ENCODE measurements at regions of chr15 and their contacts with region 1.

Region 1: DNA sequence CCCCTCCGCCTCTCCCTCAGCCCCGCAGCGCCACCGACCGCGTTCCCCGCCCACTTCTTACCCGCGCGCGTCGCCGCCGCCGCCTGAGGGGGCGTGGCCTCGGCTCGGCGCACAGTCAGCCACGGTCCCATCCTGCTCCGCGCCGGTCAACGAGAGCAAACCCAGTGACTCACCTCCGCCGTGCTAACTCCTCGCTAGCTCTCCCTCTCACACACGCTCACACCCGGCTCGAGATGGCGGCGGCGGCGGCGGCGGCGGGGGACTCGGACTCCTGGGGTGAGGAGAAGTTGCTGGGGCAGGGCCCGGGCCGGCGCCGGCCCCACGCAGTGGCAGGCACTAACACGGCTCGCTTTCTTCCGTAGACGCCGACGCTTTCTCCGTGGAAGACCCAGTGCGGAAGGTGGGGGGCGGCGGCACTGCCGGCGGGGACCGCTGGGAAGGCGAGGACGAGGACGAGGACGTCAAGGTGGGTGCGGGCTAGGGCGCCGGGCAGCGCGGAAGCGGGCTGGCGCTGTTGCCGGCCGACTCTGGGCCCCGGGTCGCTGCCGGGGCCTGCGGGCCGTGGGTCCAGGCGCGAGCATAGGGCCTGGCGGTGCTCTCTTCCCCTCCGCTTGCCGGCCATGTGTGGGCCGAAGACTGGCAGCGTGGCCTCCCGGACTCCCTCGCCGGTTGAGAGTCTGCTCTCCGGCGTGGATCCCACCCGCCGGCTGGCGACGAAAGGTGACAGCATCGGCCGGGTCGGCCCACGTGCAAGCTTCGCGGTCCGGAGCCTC is at the start of gene EIF3J:
- DNase-seq: peak; percentile 96
- H3K4me3 Mint-ChIP-seq: peak within 1 kb of the TSS; percentile 98
- H3K27ac Mint-ChIP-seq: peak within 1 kb of the TSS; percentile 99
- H3K4me1 Mint-ChIP-seq: peaks cover 41% of the 10 kb centered on the region
- H3K27me3 Mint-ChIP-seq: no peaks in the 10 kb centered on the region
- total RNA-seq, gene EIF3J: 127 and 135 TPM in 2 replicates

Region 2: GRCh38 chr15:43824302-43825246 is 712.6 kb before region 1 on chr15 and contains the start of gene MFAP1:
- intact Hi-C with region 1: loop called (anchors 10 kb)
- DNase-seq: peak; percentile 91
- H3K4me3 Mint-ChIP-seq: peak within 1 kb of the TSS; percentile 97
- H3K27ac Mint-ChIP-seq: peak within 1 kb of the TSS; percentile 98
- H3K4me1 Mint-ChIP-seq: peaks cover 28% of the 10 kb centered on the region
- H3K27me3 Mint-ChIP-seq: no peaks in the 10 kb centered on the region
- total RNA-seq, gene MFAP1: 43.7 and 44.3 TPM in 2 replicates

Region 3: DNA sequence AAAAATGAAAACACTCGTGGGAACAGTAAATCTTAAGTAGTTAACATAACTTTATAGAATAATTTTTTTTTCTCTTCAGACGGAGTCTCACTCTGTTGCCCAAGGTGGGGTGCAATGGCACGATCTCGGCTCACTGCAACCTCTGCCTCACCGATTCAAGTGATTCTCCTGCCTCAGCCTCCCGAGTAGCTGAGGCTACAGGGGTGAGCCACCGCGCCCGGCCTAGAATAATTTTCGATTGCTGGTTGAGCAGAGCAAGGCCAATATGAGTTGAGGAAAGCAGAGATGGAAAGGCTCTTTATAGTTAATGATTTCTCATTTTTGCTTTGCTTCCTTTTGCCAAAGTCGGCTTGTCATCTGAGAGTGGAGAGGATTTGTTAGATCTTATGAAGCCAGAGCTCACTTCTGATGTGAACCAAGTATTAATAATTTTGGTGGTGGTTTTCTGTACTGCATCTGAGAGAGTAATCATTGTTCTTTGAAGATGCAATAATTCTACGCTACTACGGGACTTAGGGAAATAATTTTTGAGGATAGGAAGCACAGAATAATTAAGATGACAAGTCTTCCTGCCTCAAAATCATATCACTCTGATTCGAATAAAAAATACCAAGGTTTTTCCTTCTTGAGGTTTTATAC is 250.2 kb before region 1 on chr15:
- intact Hi-C with region 1: loop called (anchors 5 kb)
- DNase-seq: no peak
- H3K4me3 Mint-ChIP-seq: peak overlapping the region; percentile 95
- H3K27ac Mint-ChIP-seq: peak overlapping the region; percentile 99
- H3K4me1 Mint-ChIP-seq: peaks cover 30% of the 10 kb centered on the region
- H3K27me3 Mint-ChIP-seq: peaks cover 8% of the 10 kb centered on the region

Region 4: GRCh38 chr15:44501768-44502366 is 35.3 kb before region 1 on chr15:
- intact Hi-C with region 1: loop called (anchors 1 kb)
- DNase-seq: no peak
- H3K4me3 Mint-ChIP-seq: no peak overlapping the region
- H3K27ac Mint-ChIP-seq: peak overlapping the region; percentile 68
- H3K4me1 Mint-ChIP-seq: peaks cover 23% of the 10 kb centered on the region
- H3K27me3 Mint-ChIP-seq: no peaks in the 10 kb centered on the region

Region 5: DNA sequence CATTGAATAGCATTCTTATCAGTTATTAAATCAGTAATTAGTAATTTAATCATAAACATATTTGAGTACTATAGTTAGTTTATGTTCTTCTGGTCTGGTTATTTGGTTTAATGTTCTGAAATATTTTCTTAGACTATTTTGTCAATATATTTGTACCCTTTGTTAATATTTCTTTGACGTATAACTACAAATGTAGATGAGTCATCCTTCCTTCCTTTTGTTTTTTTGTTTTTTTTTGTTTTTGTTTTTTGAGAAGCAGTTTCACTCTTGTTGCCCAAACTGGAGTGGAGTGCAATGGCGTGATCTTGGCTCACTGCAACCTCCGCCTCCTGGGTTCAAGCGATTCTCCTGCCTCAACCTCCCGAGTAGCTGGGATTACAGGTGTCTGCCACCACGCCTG is 17.6 kb before region 1 on chr15:
- intact Hi-C with region 1: no loop called
- DNase-seq: no peak
- H3K4me3 Mint-ChIP-seq: no peak overlapping the region
- H3K27ac Mint-ChIP-seq: no peak overlapping the region
- H3K4me1 Mint-ChIP-seq: peaks cover 2% of the 10 kb centered on the region
- H3K27me3 Mint-ChIP-seq: no peaks in the 10 kb centered on the region

Region 6: GRCh38 chr15:44711356-44712107 is 174.4 kb after region 1 on chr15 and contains the start of gene B2M:
- intact Hi-C with region 1: loop called (anchors 5 kb)
- DNase-seq: peak; percentile 95
- H3K4me3 Mint-ChIP-seq: peak within 1 kb of the TSS; percentile 98
- H3K27ac Mint-ChIP-seq: peak within 1 kb of the TSS; percentile 99
- H3K4me1 Mint-ChIP-seq: peaks cover 44% of the 10 kb centered on the region
- H3K27me3 Mint-ChIP-seq: no peaks in the 10 kb centered on the region
- total RNA-seq, gene B2M: 4,961 and 5,148 TPM in 2 replicates